ENCODE measurements at regions of chr9 and their contacts with region 1.

Region 1: DNA sequence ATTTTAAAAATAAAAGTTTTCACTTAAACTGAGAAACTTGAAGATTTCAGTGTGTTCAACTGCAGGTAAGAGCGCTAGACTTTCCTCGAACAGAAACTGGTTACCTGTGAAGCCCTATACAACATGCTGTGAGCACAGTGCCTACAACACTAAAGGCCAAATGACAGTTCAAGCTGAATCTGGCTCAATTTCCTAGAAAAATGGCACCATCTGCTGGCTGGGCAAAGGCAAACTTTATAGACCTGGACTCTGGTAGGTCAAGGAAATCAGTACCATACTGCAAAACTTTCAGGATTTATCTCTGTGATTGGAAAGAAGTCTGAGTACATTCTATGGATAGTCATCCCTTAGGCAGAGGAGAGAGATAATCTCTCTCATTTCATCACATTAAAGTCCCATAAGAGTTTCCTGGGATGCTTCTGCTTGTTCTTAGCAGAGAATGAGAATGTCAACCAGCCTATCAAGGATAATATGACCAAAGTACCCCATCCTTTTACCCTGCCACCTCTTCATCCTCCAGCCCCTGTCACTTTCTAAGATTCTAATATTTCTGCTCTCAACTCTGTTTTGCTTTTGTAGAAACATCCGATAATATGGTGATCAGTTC is 31.8 kb upstream of the FOXB2 start:
- DNase-seq: peak; percentile 91

Region 2: DNA sequence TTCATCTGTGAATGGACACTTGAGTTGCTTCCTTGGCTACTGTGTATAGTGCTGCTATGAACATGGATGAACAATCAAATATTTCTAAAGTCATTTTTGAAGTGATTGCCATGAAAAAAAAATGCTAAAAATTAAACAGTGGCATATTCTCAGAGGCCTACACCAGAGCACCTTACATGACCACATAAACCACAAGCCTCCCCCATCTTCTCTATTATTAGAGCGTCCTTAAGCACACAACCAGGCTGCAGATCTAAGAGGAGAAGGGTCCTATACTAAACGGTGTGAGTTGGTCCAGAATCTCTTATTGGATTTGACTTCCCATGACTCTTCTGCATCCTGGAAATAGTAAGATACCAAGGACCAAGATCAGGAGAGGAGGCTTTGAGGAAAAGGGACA is 189.2 kb before region 1 on chr9:
- in situ Hi-C with region 1: loop called (anchors 25 kb)
- DNase-seq: no peak

Measured in SK-MEL-5 (cell line).